Activated naive CD4-positive, alpha-beta T cell treated with anti-CD3 and anti-CD28 coated beads, Interleukin-2, amount 10 ng/mL, durations not matched to agents 7 days and 5 days (primary cell): ENCODE measurements at regions of chr1 and their contacts with region 1.

Region 1: GRCh38 chr1:171644805-171645483 is 7.5 kb downstream of the MYOC start:
- DNase-seq: peak; percentile 84
- H3K4me3 Mint-ChIP-seq: no peak overlapping the region
- H3K27ac Mint-ChIP-seq: no peak overlapping the region
- H3K4me1 Mint-ChIP-seq: peaks cover 4% of the 10 kb centered on the region
- H3K27me3 Mint-ChIP-seq: peaks cover 30% of the 10 kb centered on the region

Region 2: DNA sequence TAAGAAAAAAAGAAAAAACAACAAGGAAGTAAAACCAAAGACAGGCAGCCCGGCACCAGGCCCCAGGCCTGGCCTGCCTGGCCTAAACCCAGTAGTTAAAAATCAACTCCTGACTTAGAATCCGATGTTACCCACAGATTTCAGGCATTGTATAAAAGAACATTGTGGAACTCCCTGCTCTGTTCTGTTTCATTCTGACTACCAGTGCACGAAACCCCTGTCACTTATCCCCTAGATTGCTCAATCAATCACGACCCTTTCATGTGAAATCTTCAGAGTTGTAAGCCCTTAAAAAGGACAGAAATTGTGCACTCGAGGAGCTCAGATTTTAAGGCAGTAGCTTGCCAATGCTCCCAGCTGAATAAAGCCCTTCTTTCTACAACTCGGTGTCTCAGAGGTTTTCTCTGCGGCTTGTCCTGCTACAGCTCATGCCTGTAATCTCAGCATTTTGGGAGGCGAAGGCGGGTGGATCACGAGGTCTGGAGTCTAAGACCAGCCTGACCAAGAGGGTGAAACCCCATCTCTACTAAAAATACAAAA is 38.5 kb before region 1 on chr1:
- CTCF ChIA-PET with region 1: no interaction called
- DNase-seq: no peak
- H3K4me3 Mint-ChIP-seq: no peak overlapping the region
- H3K27ac Mint-ChIP-seq: no peak overlapping the region
- H3K4me1 Mint-ChIP-seq: no peaks in the 10 kb centered on the region
- H3K27me3 Mint-ChIP-seq: no peaks in the 10 kb centered on the region

Region 3: DNA sequence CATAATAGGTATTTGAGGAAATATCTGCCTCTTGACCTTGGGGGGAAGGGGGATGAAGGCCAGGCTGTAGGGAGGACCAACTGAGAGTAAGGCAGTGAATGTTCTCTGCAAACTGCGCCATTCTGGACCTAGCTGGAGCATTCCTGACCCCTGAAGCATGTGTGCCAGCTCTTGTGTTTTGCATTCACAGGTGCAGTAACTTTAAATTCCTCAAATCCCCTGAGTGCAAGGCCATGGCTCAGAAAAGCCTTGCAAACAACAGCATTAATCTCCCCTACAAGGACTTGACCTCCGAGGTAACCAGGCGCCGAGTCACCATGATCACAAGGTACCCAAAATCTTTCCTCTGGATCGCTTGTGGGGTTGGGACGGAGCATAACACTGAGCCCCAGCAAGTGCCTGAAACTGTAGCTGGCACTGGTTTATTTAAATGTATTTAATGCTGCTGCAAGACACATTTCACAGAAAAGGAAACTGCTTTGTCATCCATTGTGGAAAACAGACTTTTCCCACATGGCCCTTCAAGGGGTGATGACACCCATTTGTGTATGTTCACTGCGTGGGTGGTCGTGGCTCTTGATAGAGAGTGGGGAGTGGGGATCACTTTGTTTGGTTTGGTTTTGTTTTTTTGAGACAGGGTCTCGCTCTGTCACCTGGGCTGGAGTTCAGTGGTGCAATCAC is 21.2 kb before region 1 on chr1:
- CTCF ChIA-PET with region 1: no interaction called
- DNase-seq: no peak
- H3K4me3 Mint-ChIP-seq: no peak overlapping the region
- H3K27ac Mint-ChIP-seq: no peak overlapping the region
- H3K4me1 Mint-ChIP-seq: no peaks in the 10 kb centered on the region
- H3K27me3 Mint-ChIP-seq: no peaks in the 10 kb centered on the region

Region 4: DNA sequence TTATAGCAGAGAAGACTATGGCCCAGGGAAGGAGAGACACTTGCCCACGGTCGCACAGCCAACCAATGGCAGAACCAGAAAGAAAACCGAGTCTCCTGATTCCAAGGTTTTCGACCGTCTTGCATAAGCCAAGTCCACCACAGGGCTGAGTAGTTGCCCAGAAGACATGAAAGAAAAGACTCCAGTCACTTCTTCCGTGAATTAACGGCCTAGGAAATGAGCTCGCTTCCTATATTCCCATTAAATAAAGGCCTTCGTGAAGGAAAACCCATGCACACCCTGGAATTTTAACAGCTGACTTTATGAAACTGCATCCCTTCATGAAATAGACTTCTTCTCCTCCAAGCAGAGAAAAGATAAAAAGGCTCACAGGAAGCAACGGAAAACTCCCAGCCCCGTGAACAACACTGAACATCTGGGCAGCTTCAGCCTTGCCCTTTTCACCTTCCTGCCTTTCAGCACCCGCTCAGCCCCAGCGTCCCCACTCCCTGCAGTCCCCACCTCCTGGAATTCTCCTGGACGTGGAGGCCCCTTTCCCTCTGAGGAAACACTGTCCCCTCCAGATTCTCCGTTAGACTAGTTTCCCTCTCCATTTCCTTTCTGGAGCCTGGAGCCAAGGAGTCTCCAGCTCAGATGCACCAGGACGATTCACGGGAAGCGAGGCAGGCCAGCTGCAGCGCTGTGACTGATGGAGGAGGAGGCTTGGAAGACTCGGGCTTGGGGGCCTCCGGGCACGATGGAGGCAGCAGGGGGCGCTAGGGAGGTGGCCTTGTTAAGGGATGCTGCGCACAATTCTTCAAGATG is 10.2 kb after region 1 on chr1:
- CTCF ChIA-PET with region 1: interaction called, 29 read pairs
- DNase-seq: peak; percentile 84
- H3K4me3 Mint-ChIP-seq: peak overlapping the region; percentile 27
- H3K27ac Mint-ChIP-seq: no peak overlapping the region
- H3K4me1 Mint-ChIP-seq: peaks cover 13% of the 10 kb centered on the region
- H3K27me3 Mint-ChIP-seq: peaks cover 33% of the 10 kb centered on the region

Region 5: DNA sequence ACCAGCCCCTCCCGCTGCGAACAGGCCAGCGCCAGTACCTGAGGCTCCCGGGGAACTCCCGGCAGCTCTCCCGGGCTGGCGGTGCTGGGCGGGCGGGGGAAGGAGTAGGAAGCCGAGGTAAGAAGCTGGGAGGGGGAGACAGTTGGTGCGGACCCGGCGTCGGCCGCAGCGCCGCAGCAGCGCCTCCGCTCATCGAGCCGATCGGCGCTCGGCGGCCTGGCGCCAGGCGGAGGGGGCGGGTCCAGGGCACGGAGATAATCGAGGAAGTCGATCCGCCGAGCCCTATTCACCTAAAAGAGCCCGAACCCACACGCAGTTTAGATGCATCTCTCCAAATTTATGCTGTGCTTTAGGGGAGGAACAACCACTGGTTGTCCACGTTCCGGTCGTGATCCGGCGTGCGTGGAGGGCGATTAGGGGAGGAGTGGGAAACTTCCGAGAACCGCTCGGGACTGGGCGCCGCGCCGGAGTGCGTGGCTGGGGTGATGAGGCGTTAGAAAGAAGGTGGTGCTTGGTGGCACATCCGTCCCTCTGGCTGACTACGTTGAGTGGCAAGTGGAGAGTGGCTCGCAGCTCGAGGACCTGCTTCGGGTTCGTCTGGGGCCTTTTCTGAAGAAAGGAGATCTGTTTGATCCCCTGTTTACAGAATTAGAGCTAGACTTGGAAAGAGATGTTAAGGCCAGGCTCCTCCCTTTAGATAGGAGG is 97.1 kb after region 1 on chr1 and contains the start of gene VAMP4:
- CTCF ChIA-PET with region 1: interaction called, 35 read pairs
- DNase-seq: peak; percentile 91
- H3K4me3 Mint-ChIP-seq: peak within 1 kb of the TSS; percentile 94
- H3K27ac Mint-ChIP-seq: peak within 1 kb of the TSS; percentile 100
- H3K4me1 Mint-ChIP-seq: peaks cover 55% of the 10 kb centered on the region
- H3K27me3 Mint-ChIP-seq: no peaks in the 10 kb centered on the region

Region 6: GRCh38 chr1:171801487-171801891 is 156.5 kb after region 1 on chr1:
- CTCF ChIA-PET with region 1: interaction called, 21 read pairs
- DNase-seq: no peak
- H3K4me3 Mint-ChIP-seq: no peak overlapping the region
- H3K27ac Mint-ChIP-seq: no peak overlapping the region
- H3K4me1 Mint-ChIP-seq: peaks cover 6% of the 10 kb centered on the region
- H3K27me3 Mint-ChIP-seq: peaks cover 1% of the 10 kb centered on the region

Region 7: DNA sequence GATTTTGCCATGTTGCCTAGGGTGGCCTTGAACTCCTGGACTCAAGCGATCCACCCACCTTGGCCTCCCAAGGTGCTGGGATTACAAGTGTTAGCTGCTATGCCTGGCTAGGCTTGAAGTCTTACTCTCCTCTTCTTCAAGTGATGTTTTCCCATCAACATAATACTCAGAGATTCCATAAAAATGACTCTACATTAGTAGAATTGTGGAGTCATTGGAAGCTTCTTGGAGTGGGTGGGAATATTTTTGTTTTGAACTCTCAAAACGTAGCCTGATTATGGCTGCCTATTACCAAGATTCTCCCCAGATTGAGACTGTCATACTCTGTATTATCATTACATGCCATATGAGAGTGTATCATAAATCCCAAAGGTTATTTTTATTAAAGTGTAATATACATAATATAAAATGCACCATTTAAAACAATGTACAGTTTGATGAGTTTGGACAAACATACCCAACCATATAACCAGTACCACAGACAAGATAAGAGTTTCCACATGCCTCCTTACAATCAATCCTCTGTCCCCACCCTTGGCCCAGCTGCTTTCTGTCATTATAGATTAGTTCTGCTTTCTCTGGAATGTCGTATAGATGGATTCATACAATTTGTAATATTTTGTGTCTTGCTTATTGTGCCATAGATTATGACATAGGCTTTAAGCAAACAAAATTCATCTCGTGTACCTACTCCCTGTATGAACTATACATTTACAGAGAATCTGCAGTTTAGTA is 188.3 kb after region 1 on chr1:
- CTCF ChIA-PET with region 1: no interaction called
- DNase-seq: no peak
- H3K4me3 Mint-ChIP-seq: no peak overlapping the region
- H3K27ac Mint-ChIP-seq: no peak overlapping the region
- H3K4me1 Mint-ChIP-seq: no peaks in the 10 kb centered on the region
- H3K27me3 Mint-ChIP-seq: no peaks in the 10 kb centered on the region